A673 (cell line): ENCODE measurements at regions of chr2 and their contacts with region 1.

Region 1: DNA sequence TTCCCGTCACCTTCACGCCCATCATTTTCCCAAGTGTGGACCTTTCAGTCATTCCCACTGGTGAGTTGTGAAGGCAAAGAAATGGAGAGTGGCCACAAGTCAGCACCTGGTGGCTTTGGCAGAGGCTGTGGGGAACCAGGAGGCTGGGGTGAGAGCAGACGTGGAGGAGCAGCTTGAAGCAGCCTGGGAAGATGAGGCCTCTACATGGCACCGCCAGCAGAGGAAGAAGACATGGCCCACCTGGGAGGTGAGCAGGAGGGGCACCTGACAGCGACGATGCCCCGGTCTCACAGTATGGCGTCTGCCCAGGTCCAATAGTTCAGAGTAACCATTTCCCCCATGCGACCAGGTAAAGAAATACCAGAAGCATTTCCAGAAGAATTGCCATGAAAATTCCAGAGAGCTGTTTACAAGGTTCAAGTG is 69.0 kb downstream of the TPO start:
- DNase-seq: no peak
- H3K4me3 ChIP-seq: no peak overlapping the region
- H3K27ac ChIP-seq: no peak overlapping the region
- H3K4me1 ChIP-seq: no peaks in the 10 kb centered on the region
- H3K27me3 ChIP-seq: no peaks in the 10 kb centered on the region
- CTCF ChIP-seq: no peak

Region 2: GRCh38 chr2:1051064-1051983 is 430.9 kb before region 1 on chr2:
- CTCF ChIA-PET with region 1: no interaction called
- POLR2A ChIA-PET with region 1: no interaction called
- intact Hi-C with region 1: no loop called
- DNase-seq: peak; percentile 22
- H3K4me3 ChIP-seq: no peak overlapping the region
- H3K27ac ChIP-seq: no peak overlapping the region
- H3K4me1 ChIP-seq: no peaks in the 10 kb centered on the region
- H3K27me3 ChIP-seq: no peaks in the 10 kb centered on the region
- CTCF ChIP-seq: peak; percentile 51

Region 3: GRCh38 chr2:1341404-1342120 is 140.7 kb before region 1 on chr2:
- CTCF ChIA-PET with region 1: no interaction called
- POLR2A ChIA-PET with region 1: no interaction called
- intact Hi-C with region 1: no loop called
- DNase-seq: peak; percentile 74
- H3K4me3 ChIP-seq: no peak overlapping the region
- H3K27ac ChIP-seq: no peak overlapping the region
- H3K4me1 ChIP-seq: peaks cover 10% of the 10 kb centered on the region
- H3K27me3 ChIP-seq: no peaks in the 10 kb centered on the region
- CTCF ChIP-seq: no peak

Region 4: GRCh38 chr2:1527153-1527992 is 45.1 kb after region 1 on chr2:
- CTCF ChIA-PET with region 1: interaction called, 11 read pairs
- POLR2A ChIA-PET with region 1: no interaction called
- intact Hi-C with region 1: no loop called
- DNase-seq: no peak
- H3K4me3 ChIP-seq: no peak overlapping the region
- H3K27ac ChIP-seq: no peak overlapping the region
- H3K4me1 ChIP-seq: no peaks in the 10 kb centered on the region
- H3K27me3 ChIP-seq: no peaks in the 10 kb centered on the region
- CTCF ChIP-seq: no peak

Region 5: DNA sequence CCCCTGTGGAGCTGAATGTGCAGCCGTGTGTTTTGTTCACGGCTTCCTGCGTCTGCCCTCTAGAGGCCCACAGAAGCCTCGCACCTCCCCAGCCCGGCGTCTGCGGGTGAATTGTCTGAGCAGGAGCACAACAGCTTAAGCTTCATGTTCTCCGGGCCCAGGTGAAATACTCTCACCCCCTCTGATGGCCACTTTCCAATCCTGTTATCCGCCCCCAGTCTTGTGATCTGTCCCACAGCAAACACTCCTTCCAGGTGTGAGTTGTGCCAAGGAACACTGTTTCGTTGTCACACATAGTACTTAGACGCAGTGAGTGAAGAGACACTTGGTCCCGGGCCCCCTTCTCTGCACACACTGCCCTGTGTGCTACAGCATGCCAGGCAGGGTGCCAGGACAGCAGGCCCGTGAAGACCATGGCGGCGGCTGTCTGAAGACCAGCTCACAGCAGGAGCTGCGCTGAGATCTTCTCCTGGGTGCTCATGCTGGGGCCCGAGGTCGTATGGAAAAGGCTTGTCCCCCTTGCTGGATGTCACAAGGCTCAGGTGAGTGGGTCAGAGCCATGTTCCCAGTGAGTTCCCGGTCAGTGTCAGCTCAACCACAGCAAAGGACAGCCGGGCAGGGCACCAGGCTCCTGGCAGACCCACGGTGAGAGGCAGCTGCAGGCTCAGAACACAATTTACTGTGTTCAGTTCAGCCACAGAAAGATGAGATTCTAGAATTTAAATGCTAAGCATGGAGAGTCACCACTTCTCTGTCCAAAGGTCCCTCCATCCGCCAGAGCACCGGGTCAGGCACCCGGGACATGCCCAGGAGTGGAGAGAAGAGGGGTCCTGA is 268.9 kb after region 1 on chr2:
- CTCF ChIA-PET with region 1: no interaction called
- POLR2A ChIA-PET with region 1: no interaction called
- intact Hi-C with region 1: no loop called
- DNase-seq: peak; percentile 87
- H3K4me3 ChIP-seq: no peak overlapping the region
- H3K27ac ChIP-seq: no peak overlapping the region
- H3K4me1 ChIP-seq: no peaks in the 10 kb centered on the region
- H3K27me3 ChIP-seq: no peaks in the 10 kb centered on the region
- CTCF ChIP-seq: peak; percentile 89

Region 6: DNA sequence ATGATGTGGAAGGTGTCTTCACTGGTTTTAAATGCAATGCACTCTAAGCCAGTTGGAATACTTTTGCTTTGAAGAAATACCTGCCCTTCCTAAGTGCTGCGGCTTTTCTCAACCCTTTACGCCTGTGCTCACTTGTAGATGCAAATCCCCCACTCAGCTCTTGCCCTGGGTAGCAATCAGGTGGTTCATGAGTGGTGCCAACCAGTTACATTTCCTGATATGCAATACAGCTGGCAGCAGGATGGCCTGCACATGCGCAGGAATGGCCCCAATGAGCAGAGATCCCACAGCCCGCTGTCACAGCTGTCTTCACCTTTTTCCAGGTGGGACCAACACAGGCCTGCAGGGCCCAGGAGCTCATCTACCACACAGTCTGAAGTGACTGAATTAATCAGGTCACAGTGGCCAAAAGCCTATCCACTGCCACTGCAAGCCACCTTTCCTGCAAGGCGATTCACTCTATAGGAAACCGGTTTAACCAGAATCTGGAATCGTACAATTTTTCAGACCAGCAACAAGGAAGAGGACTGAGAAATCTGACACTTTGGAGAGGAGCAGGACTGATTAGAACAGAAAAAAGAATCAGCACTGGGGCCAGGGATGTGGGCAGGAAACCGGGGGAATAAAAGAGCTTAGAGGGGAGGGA is 601.0 kb after region 1 on chr2:
- CTCF ChIA-PET with region 1: no interaction called
- POLR2A ChIA-PET with region 1: no interaction called
- intact Hi-C with region 1: no loop called
- DNase-seq: no peak
- H3K4me3 ChIP-seq: no peak overlapping the region
- H3K27ac ChIP-seq: no peak overlapping the region
- H3K4me1 ChIP-seq: no peaks in the 10 kb centered on the region
- H3K27me3 ChIP-seq: no peaks in the 10 kb centered on the region
- CTCF ChIP-seq: no peak